Heart left ventricle (tissue), 16 donors: ENCODE measurements at regions of chr19 and their contacts with region 1.

Region 1: GRCh38 chr19:18058208-18059030 is 28.3 kb downstream of the IL12RB1 start:
- DNase-seq: peak; percentile 77 to 93 (median 84)
- ATAC-seq: peak; percentile 80 to 94 (median 91)
- H3K4me3 ChIP-seq: peak overlapping the region in 9 of 12 donors; percentile 10 to 45 (median 29)
- H3K27ac ChIP-seq: peak overlapping the region; percentile 68 to 92 (median 82)
- H3K4me1 ChIP-seq: peaks cover 0 to 16% (median 10%) of the 10 kb centered on the region in 12 donors
- H3K27me3 ChIP-seq: peaks cover 0 to under 1% (median 0%) of the 10 kb centered on the region in 9 donors
- CTCF ChIP-seq: peak; percentile 91 to 99 (median 94)
- POLR2A ChIP-seq: no peak

Region 2: GRCh38 chr19:17932485-17933338 is 125.7 kb before region 1 on chr19 and contains the start of gene CCDC124:
- intact Hi-C with region 1: loop called in 2 of 10 experiments (anchors 5 to 10 kb)
- DNase-seq: peak; percentile 91 to 96 (median 92)
- ATAC-seq: peak; percentile 95 to 99 (median 96)
- H3K4me3 ChIP-seq: peak within 1 kb of the TSS; percentile 65 to 99 (median 88)
- H3K27ac ChIP-seq: peak within 1 kb of the TSS in 11 of 12 donors; percentile 65 to 92 (median 87)
- H3K4me1 ChIP-seq: peaks cover 0 to 22% (median 14%) of the 10 kb centered on the region in 12 donors
- H3K27me3 ChIP-seq: no peaks in the 10 kb centered on the region
- CTCF ChIP-seq: peak; percentile 68 to 90 (median 78)
- POLR2A ChIP-seq: peak in 1 of 2 donors; percentile 84
- total RNA-seq, gene CCDC124: 45.4 to 115 (median 66.1) TPM

Region 3: DNA sequence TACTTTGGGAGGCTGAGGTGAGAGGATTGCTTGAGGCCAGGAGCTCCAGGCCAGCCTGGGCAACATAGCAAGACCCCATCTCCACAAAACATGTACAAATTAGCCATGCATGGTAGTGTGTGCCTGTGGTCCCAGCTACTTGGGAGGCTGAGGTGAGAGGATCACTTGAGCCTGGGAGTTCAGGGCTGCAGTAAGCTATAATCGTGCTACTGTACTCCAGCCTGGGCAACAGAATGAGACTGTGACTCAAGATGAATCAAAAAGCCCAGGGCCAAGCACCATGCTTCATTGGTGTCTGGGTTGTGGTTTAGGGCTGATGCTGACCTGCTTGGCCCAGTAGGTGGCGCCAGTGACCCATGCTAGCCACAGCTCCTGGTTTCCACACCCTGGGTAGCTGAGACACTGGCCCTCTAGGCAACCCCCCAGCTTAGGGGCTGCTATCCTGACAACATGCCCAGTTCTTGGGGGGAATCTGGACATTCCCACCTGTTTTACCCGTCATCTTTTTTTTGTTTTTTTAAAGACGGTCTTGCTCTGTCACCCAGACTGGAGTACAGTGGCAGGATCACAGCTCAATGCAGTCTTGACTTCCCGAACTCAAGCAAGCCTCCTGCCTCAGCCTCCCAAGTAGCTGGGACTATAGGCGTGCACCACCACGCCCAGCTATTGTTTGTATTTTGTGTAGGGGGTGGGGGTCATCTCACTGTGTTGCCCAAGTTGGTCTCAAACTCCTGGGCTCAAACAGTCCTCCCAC is 120.2 kb before region 1 on chr19:
- intact Hi-C with region 1: loop called in 4 of 10 experiments (anchors 2 to 10 kb)
- DNase-seq: peak; percentile 63 to 86 (median 75)
- ATAC-seq: peak; percentile 73 to 91 (median 86)
- H3K4me3 ChIP-seq: no peak overlapping the region
- H3K27ac ChIP-seq: no peak overlapping the region
- H3K4me1 ChIP-seq: peaks cover 0 to 11% (median 8%) of the 10 kb centered on the region in 12 donors
- H3K27me3 ChIP-seq: no peaks in the 10 kb centered on the region
- CTCF ChIP-seq: peak; percentile 85 to 97 (median 90)
- POLR2A ChIP-seq: no peak

Region 4: DNA sequence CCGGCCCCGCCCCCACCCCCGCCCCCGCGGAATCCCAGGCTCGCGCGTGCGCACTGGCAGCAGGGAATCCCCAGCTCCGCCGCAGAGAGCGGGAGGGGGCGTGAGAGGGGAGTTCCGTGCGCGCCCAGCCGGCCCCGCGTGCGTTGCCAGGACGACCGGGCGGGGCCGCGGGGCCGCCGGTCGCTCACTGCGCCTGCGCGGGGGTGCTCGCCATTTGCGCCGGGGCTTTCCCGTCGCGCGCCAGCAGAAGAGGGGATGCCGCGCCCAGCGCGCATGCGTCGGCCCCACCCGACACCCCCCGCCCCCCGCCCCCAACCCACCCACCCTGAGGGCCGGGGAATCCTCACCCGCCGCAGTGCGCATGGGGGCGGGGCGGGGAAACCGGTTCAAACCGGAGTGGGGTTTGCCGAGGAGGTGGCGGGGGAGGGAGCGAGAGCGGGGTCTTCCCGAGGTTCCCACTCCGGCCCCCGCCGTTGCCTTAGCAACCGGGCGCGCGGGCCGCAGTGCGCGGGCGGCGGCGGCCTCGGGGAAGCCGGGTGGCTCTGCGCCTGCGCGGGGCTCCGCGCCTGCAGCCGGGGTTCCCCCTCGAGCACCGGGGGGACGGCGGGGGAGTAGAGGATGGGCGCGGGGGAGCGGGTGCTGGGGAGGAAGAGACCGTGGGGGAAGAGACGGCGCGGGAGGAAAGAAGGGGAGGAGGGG is 110.5 kb before region 1 on chr19:
- intact Hi-C with region 1: loop called in 4 of 10 experiments (anchors 5 kb)
- DNase-seq: peak; percentile 93 to 96 (median 94)
- ATAC-seq: peak; percentile 65 to 92 (median 90)
- H3K4me3 ChIP-seq: peak overlapping the region; percentile 65 to 94 (median 81)
- H3K27ac ChIP-seq: peak overlapping the region in 7 of 12 donors; percentile 47 to 80 (median 56)
- H3K4me1 ChIP-seq: peaks cover 6 to 55% (median 38%) of the 10 kb centered on the region in 12 donors
- H3K27me3 ChIP-seq: peaks cover 26 to 51% (median 35%) of the 10 kb centered on the region in 9 donors
- CTCF ChIP-seq: no peak
- POLR2A ChIP-seq: no peak

Region 5: GRCh38 chr19:18007044-18007916 is 51.1 kb before region 1 on chr19:
- intact Hi-C with region 1: loop called (anchors 1 kb)
- DNase-seq: peak; percentile 80 to 93 (median 84)
- ATAC-seq: peak; percentile 73 to 93 (median 86)
- H3K4me3 ChIP-seq: peak overlapping the region; percentile 47 to 84 (median 61)
- H3K27ac ChIP-seq: peak overlapping the region; percentile 79 to 93 (median 86)
- H3K4me1 ChIP-seq: peaks cover 0 to 47% (median 20%) of the 10 kb centered on the region in 12 donors
- H3K27me3 ChIP-seq: peaks cover 0 to 1% (median 0%) of the 10 kb centered on the region in 9 donors
- CTCF ChIP-seq: peak; percentile 95 to 99 (median 99)
- POLR2A ChIP-seq: peak in 1 of 2 donors; percentile 53

Region 6: GRCh38 chr19:18021121-18021755 is 37.2 kb before region 1 on chr19:
- intact Hi-C with region 1: loop called in 1 of 10 experiments (anchors 2 kb)
- DNase-seq: peak; percentile 89 to 95 (median 92)
- ATAC-seq: peak; percentile 12 to 66 (median 50)
- H3K4me3 ChIP-seq: peak overlapping the region in 3 of 12 donors; percentile 18 to 38 (median 33)
- H3K27ac ChIP-seq: peak overlapping the region; percentile 86 to 98 (median 94)
- H3K4me1 ChIP-seq: peaks cover 32 to 84% (median 68%) of the 10 kb centered on the region in 12 donors
- H3K27me3 ChIP-seq: no peaks in the 10 kb centered on the region
- CTCF ChIP-seq: no peak
- POLR2A ChIP-seq: peak in 1 of 2 donors; percentile 16